ENCODE measurements at regions of chr2 and their contacts with region 1.

Region 1: GRCh38 chr2:38264396-38265281 is 112.4 kb downstream of the ATL2 start:
- DNase-seq: no peak
- H3K4me3 ChIP-seq: no peak overlapping the region
- H3K27ac ChIP-seq: peak overlapping the region in 1 of 5 donors; percentile 44
- H3K4me1 ChIP-seq: peaks cover 0 to 16% of the 10 kb centered on the region in 2 donors
- H3K27me3 ChIP-seq: no peaks in the 10 kb centered on the region
- CTCF ChIP-seq: no peak
- POLR2A ChIP-seq: no peak

Region 2: GRCh38 chr2:38013158-38013752 is 251.4 kb before region 1 on chr2:
- intact Hi-C with region 1: no loop called
- DNase-seq: no peak
- H3K4me3 ChIP-seq: no peak overlapping the region
- H3K27ac ChIP-seq: no peak overlapping the region
- H3K4me1 ChIP-seq: no peaks in the 10 kb centered on the region
- H3K27me3 ChIP-seq: no peaks in the 10 kb centered on the region
- CTCF ChIP-seq: no peak
- POLR2A ChIP-seq: no peak

Region 3: DNA sequence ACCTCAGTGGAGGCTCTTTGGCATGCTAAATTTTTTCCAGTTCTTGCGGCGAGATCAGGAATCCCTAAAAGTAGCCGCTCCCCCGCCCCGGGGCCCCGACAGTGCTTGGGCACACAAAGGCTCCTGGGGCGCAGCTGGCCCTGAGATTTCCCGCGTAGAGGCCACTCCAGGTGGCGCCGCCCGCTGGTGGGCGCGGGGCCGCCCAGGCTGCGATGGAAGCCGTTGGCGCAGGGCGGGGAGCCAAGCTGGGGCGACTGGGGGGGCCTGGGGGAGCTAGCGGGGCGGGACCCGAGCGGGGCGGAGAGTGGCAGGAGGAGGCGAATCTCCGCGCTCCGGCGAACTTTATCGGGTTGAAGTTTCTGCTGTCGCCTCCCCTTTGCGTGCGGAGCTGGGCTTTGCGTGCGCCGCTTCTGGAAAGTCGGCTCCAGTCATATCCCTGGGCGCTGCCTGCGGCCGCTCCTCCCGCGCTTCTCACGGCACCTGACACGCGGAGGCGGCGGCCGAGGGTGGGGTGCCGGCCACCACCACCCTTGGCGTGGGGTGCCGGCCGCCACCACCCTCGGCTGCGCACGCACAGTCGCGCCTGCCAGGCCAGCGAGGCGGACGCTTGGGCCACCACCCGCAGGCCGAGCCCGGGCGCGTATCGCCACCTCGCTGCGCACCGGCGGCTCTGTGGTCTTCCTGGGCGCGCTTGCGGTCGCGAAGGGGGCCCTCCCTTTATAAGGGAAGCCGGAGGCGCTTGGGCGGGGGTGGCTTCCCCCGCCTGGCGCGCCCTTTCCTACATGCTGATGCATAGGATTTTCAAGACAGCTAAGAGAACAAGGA is 187.8 kb before region 1 on chr2:
- intact Hi-C with region 1: loop called in 1 of 2 experiments (anchors 10 kb)
- DNase-seq: peak; percentile 81 to 90 (median 84)
- H3K4me3 ChIP-seq: peak overlapping the region in 3 of 4 donors; percentile 40 to 75 (median 46)
- H3K27ac ChIP-seq: peak overlapping the region; percentile 50 to 92 (median 84)
- H3K4me1 ChIP-seq: peaks cover 0 to 19% of the 10 kb centered on the region in 2 donors
- H3K27me3 ChIP-seq: peaks cover 5% of the 10 kb centered on the region
- CTCF ChIP-seq: peak in 4 of 6 experiments; percentile 2 to 73 (median 20)
- POLR2A ChIP-seq: peak; percentile 14 to 54

Region 4: GRCh38 chr2:38115216-38116032 is 149.2 kb before region 1 on chr2:
- intact Hi-C with region 1: loop called in 1 of 2 experiments (anchors 10 kb)
- DNase-seq: peak; percentile 60 to 88 (median 77)
- H3K4me3 ChIP-seq: no peak overlapping the region
- H3K27ac ChIP-seq: peak overlapping the region in 2 of 5 donors; percentile 17 to 27
- H3K4me1 ChIP-seq: peaks cover 19 to 30% of the 10 kb centered on the region in 2 donors
- H3K27me3 ChIP-seq: no peaks in the 10 kb centered on the region
- CTCF ChIP-seq: peak; percentile 74 to 88 (median 80)
- POLR2A ChIP-seq: no peak

Region 5: DNA sequence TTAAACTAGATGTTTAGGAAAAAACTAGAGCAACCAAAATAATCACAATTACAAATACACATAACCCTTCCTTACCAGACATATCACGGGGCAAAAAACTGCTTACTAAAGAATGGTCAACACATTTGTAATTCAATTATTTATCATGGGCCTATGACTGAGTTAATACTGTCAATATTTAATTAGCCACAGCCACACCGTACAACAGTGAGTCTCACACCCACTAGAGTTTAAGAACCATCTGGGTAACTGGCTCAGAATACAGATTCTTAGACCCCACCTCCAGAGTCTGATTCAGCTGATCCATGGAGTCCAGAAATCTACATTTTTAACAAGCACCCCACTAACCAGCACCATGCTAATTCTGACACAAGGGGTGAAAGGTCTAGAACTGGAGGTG is 97.6 kb after region 1 on chr2:
- intact Hi-C with region 1: no loop called
- DNase-seq: no peak
- H3K4me3 ChIP-seq: no peak overlapping the region
- H3K27ac ChIP-seq: no peak overlapping the region
- H3K4me1 ChIP-seq: peaks cover 11 to 15% of the 10 kb centered on the region in 2 donors
- H3K27me3 ChIP-seq: no peaks in the 10 kb centered on the region
- CTCF ChIP-seq: no peak
- POLR2A ChIP-seq: no peak

Region 6: DNA sequence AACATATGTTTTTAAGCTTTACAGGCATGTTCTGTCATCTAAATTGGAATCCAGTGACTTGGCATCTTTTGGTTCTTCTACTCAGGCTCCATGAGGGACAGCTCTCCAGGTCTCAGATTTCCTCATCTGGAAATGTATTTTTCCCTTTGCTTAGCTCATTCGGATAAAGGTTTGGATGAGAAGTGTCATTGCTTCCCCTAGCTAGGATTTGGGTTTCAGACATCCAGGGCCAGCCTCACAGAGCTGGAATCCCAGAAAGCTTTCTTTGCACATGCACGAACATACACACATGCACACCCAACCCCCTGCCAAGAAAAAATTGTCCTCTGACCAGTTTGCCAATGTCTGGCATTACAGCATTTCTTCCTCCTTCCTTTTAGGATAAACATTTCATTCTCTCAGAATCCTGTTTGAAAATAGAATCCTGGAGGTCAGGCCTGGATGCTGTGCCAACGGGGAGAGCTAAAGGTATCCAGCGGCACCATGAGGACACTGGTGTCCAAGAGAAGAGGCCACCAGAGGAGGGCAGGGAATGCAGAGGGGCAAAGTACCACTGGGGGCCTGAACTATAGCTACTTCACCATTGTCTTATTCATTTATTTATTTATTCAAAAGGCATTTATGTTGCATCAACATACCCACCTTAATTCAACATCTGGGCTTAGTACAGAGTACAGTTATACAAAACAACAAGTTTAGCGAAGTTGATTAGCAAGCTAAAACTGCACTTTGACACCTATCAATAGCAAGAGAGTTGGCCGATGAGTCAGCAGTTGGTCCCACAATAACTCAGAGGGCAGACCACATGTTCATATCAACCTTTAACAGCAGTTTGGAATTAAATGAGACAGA is 210.3 kb after region 1 on chr2:
- intact Hi-C with region 1: no loop called
- DNase-seq: no peak
- H3K4me3 ChIP-seq: no peak overlapping the region
- H3K27ac ChIP-seq: no peak overlapping the region
- H3K4me1 ChIP-seq: no peaks in the 10 kb centered on the region
- H3K27me3 ChIP-seq: no peaks in the 10 kb centered on the region
- CTCF ChIP-seq: no peak
- POLR2A ChIP-seq: no peak

Region 7: DNA sequence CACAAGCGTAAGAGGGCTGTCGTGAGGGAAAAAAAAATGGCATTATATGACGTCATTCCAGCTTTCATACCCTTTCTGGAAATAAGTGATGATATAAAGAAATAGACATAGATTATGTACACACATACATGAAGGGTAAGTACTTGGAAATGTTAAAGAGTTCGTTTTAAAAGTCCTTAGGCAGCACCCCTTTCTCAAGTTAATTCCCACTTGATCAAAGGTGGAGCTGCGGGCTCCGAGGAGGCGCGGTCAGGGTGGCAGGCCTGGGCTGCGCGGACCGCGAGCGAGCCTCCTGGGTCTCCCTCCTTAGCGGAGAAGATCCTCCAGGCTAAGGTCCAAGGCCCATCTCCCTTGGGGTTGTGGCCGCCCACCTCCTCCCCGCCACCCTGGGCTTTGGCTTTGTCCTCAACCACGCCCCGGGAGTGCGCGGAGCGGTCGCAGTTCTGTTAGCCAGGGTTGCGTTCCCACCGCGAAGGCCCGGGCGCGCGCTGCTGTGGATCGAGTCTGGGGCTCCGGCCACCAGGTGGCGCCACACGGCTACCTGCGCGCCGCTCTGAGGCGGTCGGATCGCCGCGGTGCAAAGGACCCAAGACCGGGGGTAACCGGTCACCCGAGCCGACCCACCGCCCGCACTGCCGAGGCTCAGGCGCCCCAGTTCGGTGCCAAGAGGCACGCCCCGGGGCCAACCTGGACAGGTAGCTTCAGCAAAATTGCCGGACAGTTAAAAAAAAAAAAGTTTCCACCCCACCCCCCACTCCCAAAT is 271.3 kb after region 1 on chr2:
- intact Hi-C with region 1: no loop called
- DNase-seq: peak; percentile 72 to 91 (median 87)
- H3K4me3 ChIP-seq: peak overlapping the region in 2 of 4 donors; percentile 31 to 58
- H3K27ac ChIP-seq: peak overlapping the region in 2 of 5 donors; percentile 4 to 41
- H3K4me1 ChIP-seq: no peaks in the 10 kb centered on the region
- H3K27me3 ChIP-seq: no peaks in the 10 kb centered on the region
- CTCF ChIP-seq: peak; percentile 76 to 97 (median 91)
- POLR2A ChIP-seq: no peak

Measured in adrenal gland (tissue), 19 donors.